ENCODE measurements at regions of chr22 and their contacts with region 1.

Region 1: GRCh38 chr22:28882878-28883656 is at the start of gene ZNRF3:
- DNase-seq: peak; percentile 91
- ATAC-seq: peak; percentile 97
- H3K4me3 ChIP-seq: peak within 1 kb of the TSS; percentile 92
- H3K27ac ChIP-seq: peak within 1 kb of the TSS; percentile 63; the same call in 1 of the 2 replicates
- H3K4me1 ChIP-seq: peaks cover 16% of the 10 kb centered on the region
- H3K27me3 ChIP-seq: no peaks in the 10 kb centered on the region
- CTCF ChIP-seq: no peak
- POLR2A ChIP-seq: 0 out of 2 replicates have a peak, but pooled peaks have one; percentile 41
- RAD21 ChIP-seq: no peak
- total RNA-seq, gene ZNRF3: 1.4 TPM in 2 replicates

Region 2: GRCh38 chr22:28791841-28792490 is 91.1 kb before region 1 on chr22:
- CTCF ChIA-PET with region 1: no interaction called
- POLR2A ChIA-PET with region 1: no interaction called
- dilution Hi-C with region 1: no loop called
- in situ Hi-C with region 1: no loop called
- intact Hi-C with region 1: no loop called
- DNase-seq: peak; percentile 31
- ATAC-seq: no peak
- H3K4me3 ChIP-seq: no peak overlapping the region
- H3K27ac ChIP-seq: no peak overlapping the region
- H3K4me1 ChIP-seq: peaks cover 3% of the 10 kb centered on the region; the same call in 1 of the 2 replicates
- H3K27me3 ChIP-seq: no peaks in the 10 kb centered on the region
- CTCF ChIP-seq: no peak
- POLR2A ChIP-seq: no peak
- RAD21 ChIP-seq: no peak

Region 3: DNA sequence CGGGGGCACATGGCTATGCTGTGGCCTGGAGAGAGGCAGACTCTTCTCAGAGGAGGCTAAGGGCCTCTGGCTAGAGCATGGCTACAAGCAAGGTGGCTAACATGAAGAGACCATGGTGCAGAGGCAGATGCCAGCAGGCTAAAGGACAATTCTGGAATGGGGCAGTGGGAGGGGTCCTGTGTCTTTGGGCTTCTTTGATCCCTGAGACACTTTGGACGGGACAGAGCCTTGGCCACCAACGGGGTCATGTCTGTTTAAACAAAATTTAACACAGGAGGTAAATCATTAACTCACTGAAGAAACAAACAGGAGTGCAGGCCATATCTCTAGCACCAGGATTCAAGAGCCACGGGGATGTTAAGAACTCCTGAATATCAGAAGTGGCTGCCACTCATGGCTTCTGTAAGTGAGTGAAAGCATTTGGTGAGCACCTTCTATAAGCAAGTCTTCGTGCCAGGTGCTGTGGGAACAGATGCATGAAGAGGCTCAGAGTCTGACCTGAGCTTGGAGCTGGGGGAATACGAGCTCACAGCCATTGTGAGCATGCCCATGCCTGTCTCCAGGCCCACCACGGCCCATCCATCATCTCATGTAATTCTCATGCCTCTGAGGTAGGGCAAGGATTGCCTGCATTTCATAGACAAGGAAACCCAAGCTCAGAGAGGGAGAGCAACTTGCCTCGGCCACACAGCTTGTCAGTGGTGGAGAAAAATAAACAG is 18.0 kb before region 1 on chr22:
- CTCF ChIA-PET with region 1: interaction called, 10 read pairs
- POLR2A ChIA-PET with region 1: no interaction called
- dilution Hi-C with region 1: no loop called
- in situ Hi-C with region 1: no loop called
- intact Hi-C with region 1: no loop called
- DNase-seq: no peak
- ATAC-seq: no peak
- H3K4me3 ChIP-seq: no peak overlapping the region
- H3K27ac ChIP-seq: no peak overlapping the region
- H3K4me1 ChIP-seq: no peaks in the 10 kb centered on the region
- H3K27me3 ChIP-seq: peaks cover 8% of the 10 kb centered on the region; the same call in 1 of the 2 replicates
- CTCF ChIP-seq: no peak
- POLR2A ChIP-seq: no peak
- RAD21 ChIP-seq: no peak

Region 4: GRCh38 chr22:28935713-28936112 is 52.6 kb after region 1 on chr22:
- CTCF ChIA-PET with region 1: no interaction called
- POLR2A ChIA-PET with region 1: no interaction called
- dilution Hi-C with region 1: no loop called
- in situ Hi-C with region 1: no loop called
- intact Hi-C with region 1: no loop called
- DNase-seq: no peak
- ATAC-seq: no peak
- H3K4me3 ChIP-seq: no peak overlapping the region
- H3K27ac ChIP-seq: no peak overlapping the region
- H3K4me1 ChIP-seq: peaks cover under 1% of the 10 kb centered on the region; the same call in 1 of the 2 replicates
- H3K27me3 ChIP-seq: no peaks in the 10 kb centered on the region
- CTCF ChIP-seq: no peak
- POLR2A ChIP-seq: no peak
- RAD21 ChIP-seq: no peak

Region 5: GRCh38 chr22:29225422-29226131 is 342.5 kb after region 1 on chr22:
- CTCF ChIA-PET with region 1: no interaction called
- POLR2A ChIA-PET with region 1: no interaction called
- dilution Hi-C with region 1: no loop called
- in situ Hi-C with region 1: no loop called
- intact Hi-C with region 1: no loop called
- DNase-seq: peak; percentile 42
- ATAC-seq: peak; percentile 78
- H3K4me3 ChIP-seq: no peak overlapping the region
- H3K27ac ChIP-seq: no peak overlapping the region
- H3K4me1 ChIP-seq: peaks cover 9% of the 10 kb centered on the region; the same call in 1 of the 2 replicates
- H3K27me3 ChIP-seq: peaks cover 6% of the 10 kb centered on the region; the same call in 1 of the 2 replicates
- CTCF ChIP-seq: no peak
- POLR2A ChIP-seq: no peak
- RAD21 ChIP-seq: no peak

Measured in IMR-90 (cell line).